ENCODE measurements at regions of chr5 and their contacts with region 1.

Region 1: GRCh38 chr5:173972925-173973615 is 15.9 kb upstream of the C5orf47 start:
- DNase-seq: peak; percentile 79 to 88
- ATAC-seq: peak; percentile 73 to 85 (median 82)
- H3K4me3 ChIP-seq: peak overlapping the region; percentile 55
- H3K27ac ChIP-seq: peak overlapping the region; percentile 68
- H3K4me1 ChIP-seq: peaks cover 5% of the 10 kb centered on the region
- H3K27me3 ChIP-seq: no peaks in the 10 kb centered on the region
- CTCF ChIP-seq: peak; percentile 93

Region 2: DNA sequence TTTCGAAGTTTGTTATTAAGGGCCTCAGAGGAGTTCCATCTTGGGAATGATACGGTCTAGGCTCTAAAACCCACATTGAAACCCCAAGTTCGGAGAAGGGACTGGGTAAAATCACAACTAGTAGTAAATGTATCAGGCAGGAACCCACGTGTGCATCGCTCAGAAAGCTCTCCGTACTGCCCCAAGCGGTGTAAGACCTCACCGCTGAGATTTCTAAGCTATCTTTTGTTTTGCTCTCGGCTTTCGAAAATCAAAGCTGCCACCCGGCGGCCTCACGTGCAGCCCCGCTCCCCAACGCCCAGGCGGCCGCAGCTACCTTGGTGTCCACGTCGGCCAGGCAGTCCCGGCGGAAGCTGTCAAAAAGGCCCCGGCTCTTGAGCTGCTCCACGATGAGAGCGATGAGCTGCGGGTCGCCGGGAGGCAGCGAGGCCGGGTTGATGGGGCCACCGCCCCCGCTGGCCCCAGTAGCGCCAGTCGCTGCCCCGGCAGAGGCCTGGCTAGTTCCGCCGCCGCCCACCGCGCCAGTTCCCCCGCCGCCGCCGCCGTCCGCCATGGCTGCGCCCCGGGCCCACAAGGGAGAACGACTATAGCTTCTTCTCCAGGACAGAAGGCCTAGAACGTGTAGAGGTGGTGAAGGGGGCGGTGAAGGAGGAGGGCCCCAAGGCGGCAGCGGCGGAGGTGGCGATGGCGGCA is 357.0 kb before region 1 on chr5:
- intact Hi-C with region 1: loop called (anchors 1 to 2 kb)
- DNase-seq: peak; percentile 49 to 81
- ATAC-seq: peak; percentile 72 to 78 (median 74)
- H3K4me3 ChIP-seq: peak overlapping the region; percentile 88
- H3K27ac ChIP-seq: peak overlapping the region; percentile 97
- H3K4me1 ChIP-seq: peaks cover 53% of the 10 kb centered on the region
- H3K27me3 ChIP-seq: no peaks in the 10 kb centered on the region
- CTCF ChIP-seq: peak; percentile 69

Region 3: GRCh38 chr5:173753307-173754168 is 219.5 kb before region 1 on chr5:
- intact Hi-C with region 1: loop called in 1 of 2 experiments (anchors 5 kb)
- DNase-seq: peak; percentile 84 to 95
- ATAC-seq: peak; percentile 94 to 96 (median 95)
- H3K4me3 ChIP-seq: peak overlapping the region; percentile 41
- H3K27ac ChIP-seq: peak overlapping the region; percentile 92
- H3K4me1 ChIP-seq: peaks cover 34% of the 10 kb centered on the region
- H3K27me3 ChIP-seq: no peaks in the 10 kb centered on the region
- CTCF ChIP-seq: no peak

Region 4: DNA sequence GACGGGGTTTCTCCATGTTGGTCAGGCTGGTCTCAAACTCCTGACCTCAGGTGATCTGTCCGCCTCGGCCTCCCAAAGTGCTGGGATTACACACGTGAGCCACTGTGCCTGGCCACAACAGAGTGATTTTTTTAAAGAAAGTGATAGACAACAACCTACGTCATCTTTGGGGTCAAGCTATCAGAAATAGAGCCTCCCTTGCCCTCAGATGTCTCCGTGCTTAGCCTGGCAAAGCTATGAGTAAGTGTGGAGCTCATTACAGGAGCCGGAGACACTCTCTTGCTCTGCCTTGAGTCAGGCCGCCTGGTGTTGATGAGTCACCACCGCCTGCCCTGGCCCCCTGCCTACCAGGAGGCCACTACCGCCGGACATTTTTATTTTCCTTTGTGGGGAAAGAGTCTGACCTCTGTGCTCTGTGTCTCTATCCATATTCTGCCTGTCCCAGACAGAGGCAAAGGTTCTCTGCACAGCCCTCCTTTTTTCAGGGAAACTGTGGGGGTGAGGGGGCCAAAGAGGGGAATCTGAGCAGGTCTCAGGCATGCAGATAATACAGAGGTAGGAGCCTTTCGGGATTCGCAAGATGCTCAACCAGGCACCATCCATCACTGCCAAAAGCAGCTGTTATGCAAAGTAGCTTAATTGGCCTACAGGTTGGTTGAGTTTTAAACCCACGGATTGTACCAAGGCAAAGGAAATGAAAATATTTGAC is 208.6 kb before region 1 on chr5:
- intact Hi-C with region 1: loop called (anchors 5 kb)
- DNase-seq: peak; percentile 88 to 95
- ATAC-seq: peak; percentile 74 to 81 (median 79)
- H3K4me3 ChIP-seq: no peak overlapping the region
- H3K27ac ChIP-seq: peak overlapping the region; percentile 86
- H3K4me1 ChIP-seq: peaks cover 45% of the 10 kb centered on the region
- H3K27me3 ChIP-seq: no peaks in the 10 kb centered on the region
- CTCF ChIP-seq: no peak

Region 5: GRCh38 chr5:173772384-173773059 is 200.5 kb before region 1 on chr5:
- intact Hi-C with region 1: loop called in 1 of 2 experiments (anchors 5 kb)
- DNase-seq: no peak
- ATAC-seq: no peak
- H3K4me3 ChIP-seq: no peak overlapping the region
- H3K27ac ChIP-seq: no peak overlapping the region
- H3K4me1 ChIP-seq: peaks cover 12% of the 10 kb centered on the region
- H3K27me3 ChIP-seq: no peaks in the 10 kb centered on the region
- CTCF ChIP-seq: no peak

Region 6: DNA sequence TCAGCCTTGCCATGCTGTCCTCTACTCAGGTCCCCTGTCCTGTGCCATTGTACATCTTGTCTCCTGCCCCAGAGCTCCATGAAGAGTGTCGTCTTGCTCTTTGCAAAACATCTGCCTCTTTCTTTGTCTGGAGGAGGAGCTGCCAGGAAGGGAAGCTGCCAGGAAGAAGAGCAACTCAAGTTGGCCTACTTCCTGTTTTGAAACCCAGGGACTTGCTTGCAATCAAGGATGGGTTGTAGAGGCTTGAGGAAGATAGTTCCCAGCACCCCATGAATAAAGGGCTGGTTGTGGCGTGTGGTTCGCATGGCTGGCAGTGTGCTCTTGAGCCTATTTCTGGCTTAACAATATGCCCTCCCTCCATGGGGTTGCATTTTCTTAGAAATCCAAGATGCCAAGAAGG is 137.9 kb before region 1 on chr5:
- intact Hi-C with region 1: loop called in 1 of 2 experiments (anchors 5 kb)
- DNase-seq: no peak
- ATAC-seq: peak in 3 of 4 donors; percentile 9 to 32 (median 17)
- H3K4me3 ChIP-seq: no peak overlapping the region
- H3K27ac ChIP-seq: peak overlapping the region; percentile 62
- H3K4me1 ChIP-seq: peaks cover 32% of the 10 kb centered on the region
- H3K27me3 ChIP-seq: no peaks in the 10 kb centered on the region
- CTCF ChIP-seq: no peak

Region 7: DNA sequence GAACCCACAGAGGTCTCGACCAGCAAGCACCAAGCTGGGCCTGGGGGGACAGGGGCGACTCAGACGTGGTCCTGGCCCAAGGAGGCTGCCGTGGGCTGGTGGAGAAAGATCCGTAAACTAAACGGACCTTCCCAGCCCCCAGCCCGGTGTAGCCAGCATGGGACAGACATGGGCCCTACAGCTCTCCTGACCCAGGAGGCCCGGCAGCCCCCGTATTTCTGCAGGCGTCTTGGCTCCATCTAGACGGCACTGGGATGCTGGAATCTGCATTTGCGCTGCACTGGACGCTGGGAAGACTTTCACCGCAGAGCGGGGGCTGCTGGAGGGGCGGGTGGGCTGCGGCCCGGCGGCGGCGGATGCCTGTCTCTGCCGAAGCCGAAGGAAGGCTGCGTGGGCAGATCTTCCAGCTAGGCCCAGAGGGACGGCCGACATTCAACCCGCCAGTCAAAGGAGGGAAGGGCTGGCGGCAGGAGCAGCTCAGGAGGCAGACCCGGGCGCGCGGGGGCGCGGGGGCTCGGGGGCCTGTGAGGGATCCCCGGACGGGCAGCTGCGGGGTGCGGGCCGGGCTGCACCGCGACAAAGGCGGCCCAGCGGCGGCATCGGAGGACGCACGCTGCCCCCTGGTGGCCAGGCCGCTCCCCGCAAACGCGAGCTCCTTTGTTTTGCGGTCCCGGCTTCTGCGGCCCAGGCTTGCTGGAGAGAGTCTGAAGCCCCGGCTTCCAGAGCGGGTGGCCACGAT is 338.6 kb after region 1 on chr5:
- intact Hi-C with region 1: loop called in 1 of 2 experiments (anchors 10 kb)
- DNase-seq: peak; percentile 69 to 82
- ATAC-seq: peak; percentile 66 to 84 (median 78)
- H3K4me3 ChIP-seq: peak overlapping the region; percentile 65
- H3K27ac ChIP-seq: no peak overlapping the region
- H3K4me1 ChIP-seq: peaks cover 7% of the 10 kb centered on the region
- H3K27me3 ChIP-seq: peaks cover 0 to 2% (median 0%) of the 10 kb centered on the region in 3 donors
- CTCF ChIP-seq: peak; percentile 88

Measured in psoas muscle (tissue), 8 donors.